Heart right ventricle (tissue), 16 donors: ENCODE measurements at regions of chr1 and their contacts with region 1.

Region 1: DNA sequence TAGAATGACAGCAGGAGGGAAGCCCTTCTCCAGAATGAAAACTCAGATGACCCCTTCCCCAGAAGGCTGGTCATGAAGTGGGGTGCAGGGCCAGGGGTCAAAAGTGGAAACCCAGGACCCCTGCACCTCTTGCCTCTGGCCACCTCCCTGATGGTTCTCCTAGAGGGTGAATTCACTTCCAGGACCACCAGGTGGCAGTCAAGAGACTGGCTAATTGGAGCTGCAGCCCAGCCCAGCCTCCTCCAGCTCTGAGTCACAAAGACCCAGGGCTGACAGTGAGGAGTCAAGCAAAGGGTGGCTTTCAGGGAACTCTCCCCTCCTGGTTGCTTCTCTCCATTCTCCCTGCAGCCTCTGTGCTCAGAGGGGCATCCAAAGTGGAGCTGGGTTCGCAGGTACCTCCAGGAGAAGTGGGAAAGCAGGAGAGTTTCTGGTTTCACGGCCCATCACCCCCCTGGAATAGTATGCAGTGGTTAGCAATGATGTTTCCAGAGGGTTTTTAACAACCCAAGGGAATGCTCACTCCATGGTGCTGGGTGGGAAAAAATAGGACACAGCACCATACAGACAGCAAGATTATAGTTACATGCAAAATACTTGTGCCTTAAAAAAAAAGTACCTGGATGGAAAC is 6.1 kb upstream of the EPHB2 start:
- DNase-seq: peak; percentile 55 to 86
- ATAC-seq: peak; percentile 84 to 96 (median 89)
- H3K4me3 ChIP-seq: no peak overlapping the region
- H3K27ac ChIP-seq: no peak overlapping the region
- H3K4me1 ChIP-seq: peaks cover 0 to 27% (median 0%) of the 10 kb centered on the region in 9 donors
- H3K27me3 ChIP-seq: peaks cover 0 to 14% (median 3%) of the 10 kb centered on the region in 7 donors
- CTCF ChIP-seq: peak; percentile 80 to 93 (median 89)

Region 2: GRCh38 chr1:22641906-22642636 is 62.5 kb before region 1 on chr1:
- intact Hi-C with region 1: no loop called
- DNase-seq: peak; percentile 81 to 88
- ATAC-seq: peak; percentile 78 to 90 (median 88)
- H3K4me3 ChIP-seq: no peak overlapping the region
- H3K27ac ChIP-seq: peak overlapping the region in 1 of 10 donors; percentile 56
- H3K4me1 ChIP-seq: peaks cover 0 to 13% (median 3%) of the 10 kb centered on the region in 9 donors
- H3K27me3 ChIP-seq: peaks cover 0 to 28% (median 21%) of the 10 kb centered on the region in 7 donors
- CTCF ChIP-seq: peak; percentile 84 to 97 (median 93)

Region 3: DNA sequence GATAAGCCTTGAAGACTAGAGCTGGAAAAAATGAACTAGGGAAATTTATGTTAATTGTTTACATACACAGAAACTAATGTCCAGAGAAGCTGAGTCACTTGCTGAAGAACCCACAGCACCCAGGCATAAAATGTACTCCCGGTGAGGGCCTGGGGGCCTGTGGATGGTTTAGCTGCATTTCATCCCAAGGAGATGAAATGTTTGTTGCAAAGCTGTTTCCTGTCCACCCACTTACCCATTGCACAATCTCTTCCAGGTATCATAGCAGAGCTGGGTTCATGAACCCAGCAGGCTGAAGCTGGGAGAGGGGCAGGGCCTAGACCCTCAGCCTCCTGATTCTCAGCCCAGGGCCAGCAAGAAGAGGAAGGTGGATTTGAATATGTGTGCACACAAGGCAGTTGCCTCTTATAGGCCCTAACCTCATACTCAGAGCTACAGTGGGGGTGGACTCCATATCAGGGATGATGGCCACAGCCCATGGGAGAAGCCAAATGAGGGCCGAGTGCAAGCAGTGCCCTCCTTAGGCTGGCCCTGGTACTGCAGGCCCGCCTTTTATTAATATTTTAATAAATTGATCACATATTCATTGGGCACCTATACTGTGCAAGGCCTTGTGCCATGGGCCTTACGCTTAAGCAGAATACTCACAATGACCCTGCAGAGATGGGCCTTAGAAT is 157.3 kb after region 1 on chr1:
- intact Hi-C with region 1: loop called in 3 of 10 experiments (anchors 10 kb)
- DNase-seq: no peak
- ATAC-seq: peak; percentile 32 to 79 (median 64)
- H3K4me3 ChIP-seq: no peak overlapping the region
- H3K27ac ChIP-seq: no peak overlapping the region
- H3K4me1 ChIP-seq: peaks cover 0 to 6% (median 0%) of the 10 kb centered on the region in 9 donors
- H3K27me3 ChIP-seq: peaks cover 0 to 3% (median 0%) of the 10 kb centered on the region in 7 donors
- CTCF ChIP-seq: peak; percentile 38 to 81 (median 68)

Region 4: GRCh38 chr1:22889213-22889827 is 184.8 kb after region 1 on chr1:
- intact Hi-C with region 1: loop called in 9 of 10 experiments (anchors 1 to 10 kb)
- DNase-seq: no peak
- ATAC-seq: peak in 4 of 8 donors; percentile 18 to 54 (median 33)
- H3K4me3 ChIP-seq: no peak overlapping the region
- H3K27ac ChIP-seq: no peak overlapping the region
- H3K4me1 ChIP-seq: peaks cover 0 to 8% (median 0%) of the 10 kb centered on the region in 9 donors
- H3K27me3 ChIP-seq: peaks cover 0 to 17% (median 0%) of the 10 kb centered on the region in 7 donors
- CTCF ChIP-seq: peak; percentile 53 to 80 (median 73)

Region 5: DNA sequence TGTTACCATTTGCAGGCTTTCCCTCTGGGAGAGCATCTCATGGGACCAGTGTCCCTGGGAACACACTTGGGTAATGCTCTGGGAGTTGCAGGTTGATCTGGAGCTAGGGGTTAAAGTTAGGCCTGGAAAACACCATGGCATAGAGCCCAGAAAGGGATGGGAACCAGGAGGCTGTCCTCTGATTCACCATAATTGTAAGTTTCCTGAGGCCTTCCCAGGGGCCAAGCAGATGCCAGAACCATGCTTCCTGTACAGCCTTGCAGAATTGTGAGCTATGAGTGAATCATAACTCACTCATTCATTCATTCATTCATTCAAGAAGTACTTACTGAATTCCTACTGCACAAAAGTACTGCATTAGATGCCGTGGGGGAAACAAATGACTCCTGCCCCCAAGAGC is 218.1 kb after region 1 on chr1:
- intact Hi-C with region 1: loop called in 2 of 10 experiments (anchors 10 kb)
- DNase-seq: no peak
- ATAC-seq: no peak
- H3K4me3 ChIP-seq: no peak overlapping the region
- H3K27ac ChIP-seq: no peak overlapping the region
- H3K4me1 ChIP-seq: peaks cover 0 to 13% (median 8%) of the 10 kb centered on the region in 9 donors
- H3K27me3 ChIP-seq: peaks cover 0 to 28% (median 4%) of the 10 kb centered on the region in 7 donors
- CTCF ChIP-seq: no peak

Region 6: DNA sequence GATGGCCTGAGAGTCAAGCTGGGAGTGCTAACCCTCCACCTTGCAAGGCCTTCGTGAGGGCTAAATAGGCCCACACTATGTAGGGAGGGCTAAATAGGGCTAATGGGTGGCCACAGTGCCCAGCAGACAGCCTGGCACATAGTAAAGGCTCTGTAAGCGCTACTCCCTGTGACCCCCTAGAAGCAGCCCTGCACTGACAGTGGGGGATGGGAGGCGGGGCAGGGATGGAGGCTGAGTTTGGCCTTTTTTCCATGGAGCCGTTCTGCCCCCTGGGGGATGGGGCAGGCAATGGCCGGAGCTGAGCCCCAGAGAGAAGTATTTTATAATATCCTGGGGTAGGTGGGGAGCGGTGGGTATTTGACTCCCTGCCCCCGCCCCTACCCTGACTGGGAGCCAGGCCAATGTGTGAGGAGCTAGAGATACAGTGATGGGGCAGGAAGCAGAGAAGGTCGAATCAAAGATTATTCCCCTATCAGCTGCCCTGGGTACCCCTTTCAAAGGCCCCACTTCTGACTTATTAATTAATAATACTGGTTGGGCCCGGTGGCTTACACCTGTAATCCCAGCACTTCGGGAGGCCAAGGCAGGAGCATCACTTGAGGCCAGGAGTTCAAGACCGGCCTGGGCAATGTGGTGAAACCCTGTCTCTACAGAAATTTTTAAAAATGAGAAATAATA is 225.8 kb after region 1 on chr1:
- intact Hi-C with region 1: loop called in 7 of 10 experiments (anchors 1 to 10 kb)
- DNase-seq: peak; percentile 25 to 48
- ATAC-seq: peak; percentile 20 to 80 (median 72)
- H3K4me3 ChIP-seq: no peak overlapping the region
- H3K27ac ChIP-seq: no peak overlapping the region
- H3K4me1 ChIP-seq: no peaks in the 10 kb centered on the region
- H3K27me3 ChIP-seq: peaks cover 0 to 40% (median 12%) of the 10 kb centered on the region in 7 donors
- CTCF ChIP-seq: peak in 8 of 9 donors; percentile 61 to 76 (median 70)